Activated naive CD4-positive, alpha-beta T cell treated with anti-CD3 and anti-CD28 coated beads for 36 hours (primary cell): ENCODE measurements at regions of chr2 and their contacts with region 1.

Region 1: DNA sequence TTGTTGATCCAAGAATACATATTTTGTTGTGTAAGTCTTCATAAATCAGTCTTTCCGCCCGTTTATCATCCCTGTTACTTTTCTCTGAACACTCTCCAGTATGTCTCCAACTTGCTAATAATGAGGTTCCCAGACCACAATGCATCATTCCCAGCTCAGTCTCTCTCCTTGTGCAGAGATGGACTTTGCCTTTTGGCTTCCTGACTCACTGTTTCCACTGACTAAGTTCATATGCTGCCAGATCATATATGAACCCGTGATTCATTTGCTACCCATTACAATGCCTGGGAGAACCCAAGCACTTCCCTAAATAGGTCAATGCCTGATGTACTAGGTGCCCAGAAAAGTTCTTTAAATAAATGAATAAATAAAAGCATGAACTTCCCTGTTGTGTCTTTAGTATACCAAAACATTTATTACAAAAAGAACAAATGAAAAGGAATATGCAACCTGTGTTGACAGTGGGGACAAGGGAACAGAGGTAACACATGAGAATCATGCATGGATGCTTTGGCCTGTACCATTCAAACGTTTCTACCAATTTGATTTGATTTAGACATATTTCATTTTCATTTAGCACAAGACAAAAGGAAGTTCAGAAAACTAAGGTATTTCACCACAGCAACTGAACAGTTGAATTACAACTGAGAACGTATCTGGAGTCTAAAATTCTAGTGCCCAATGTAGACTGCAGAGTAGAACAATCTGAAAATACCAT is 215.4 kb upstream of the HNRNPA3 start:
- DNase-seq: peak; percentile 46
- H3K4me3 Mint-ChIP-seq: no peak overlapping the region
- H3K27ac Mint-ChIP-seq: peak overlapping the region; percentile 19
- H3K4me1 Mint-ChIP-seq: peaks cover 27% of the 10 kb centered on the region
- H3K27me3 Mint-ChIP-seq: peaks cover 2% of the 10 kb centered on the region

Region 2: GRCh38 chr2:176595986-176596385 is 401.2 kb before region 1 on chr2:
- CTCF ChIA-PET with region 1: no interaction called
- intact Hi-C with region 1: no loop called
- DNase-seq: no peak
- H3K4me3 Mint-ChIP-seq: no peak overlapping the region
- H3K27ac Mint-ChIP-seq: no peak overlapping the region
- H3K4me1 Mint-ChIP-seq: no peaks in the 10 kb centered on the region
- H3K27me3 Mint-ChIP-seq: peaks cover 26% of the 10 kb centered on the region

Region 3: GRCh38 chr2:176826984-176827668 is 170.1 kb before region 1 on chr2:
- CTCF ChIA-PET with region 1: no interaction called
- intact Hi-C with region 1: loop called (anchors 1 kb)
- DNase-seq: peak; percentile 61
- H3K4me3 Mint-ChIP-seq: no peak overlapping the region
- H3K27ac Mint-ChIP-seq: peak overlapping the region; percentile 74
- H3K4me1 Mint-ChIP-seq: peaks cover 39% of the 10 kb centered on the region
- H3K27me3 Mint-ChIP-seq: no peaks in the 10 kb centered on the region

Region 4: GRCh38 chr2:176931588-176932563 is 65.4 kb before region 1 on chr2:
- CTCF ChIA-PET with region 1: no interaction called
- intact Hi-C with region 1: loop called (anchors 1 kb)
- DNase-seq: peak; percentile 23
- H3K4me3 Mint-ChIP-seq: no peak overlapping the region
- H3K27ac Mint-ChIP-seq: no peak overlapping the region
- H3K4me1 Mint-ChIP-seq: peaks cover 10% of the 10 kb centered on the region
- H3K27me3 Mint-ChIP-seq: peaks cover 8% of the 10 kb centered on the region

Region 5: GRCh38 chr2:177058747-177059146 is 61.5 kb after region 1 on chr2:
- CTCF ChIA-PET with region 1: no interaction called
- intact Hi-C with region 1: loop called (anchors 2 kb)
- DNase-seq: no peak
- H3K4me3 Mint-ChIP-seq: no peak overlapping the region
- H3K27ac Mint-ChIP-seq: no peak overlapping the region
- H3K4me1 Mint-ChIP-seq: no peaks in the 10 kb centered on the region
- H3K27me3 Mint-ChIP-seq: peaks cover 5% of the 10 kb centered on the region

Region 6: DNA sequence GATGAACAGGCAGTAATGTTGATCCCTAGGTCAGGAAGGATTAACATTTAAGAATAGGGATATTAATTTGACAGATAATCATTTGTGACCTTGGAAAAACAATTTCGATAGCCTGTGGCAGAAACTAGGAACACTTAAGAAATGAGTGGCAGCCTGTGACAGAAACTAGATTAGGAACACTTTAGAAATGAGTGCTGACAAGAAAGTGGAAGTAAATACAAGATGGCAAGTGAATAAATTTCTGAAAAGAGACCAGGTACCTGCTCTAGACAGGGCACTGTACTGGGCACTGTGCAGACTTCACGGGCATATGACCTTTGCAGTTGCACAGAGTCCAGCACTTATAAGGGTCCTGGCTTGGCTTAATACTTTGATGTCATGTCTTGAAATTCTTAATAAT is 209.9 kb after region 1 on chr2:
- CTCF ChIA-PET with region 1: no interaction called
- intact Hi-C with region 1: loop called (anchors 2 kb)
- DNase-seq: no peak
- H3K4me3 Mint-ChIP-seq: no peak overlapping the region
- H3K27ac Mint-ChIP-seq: no peak overlapping the region
- H3K4me1 Mint-ChIP-seq: peaks cover 24% of the 10 kb centered on the region
- H3K27me3 Mint-ChIP-seq: no peaks in the 10 kb centered on the region